ENCODE measurements at regions of chr6 and their contacts with region 1.

Region 1: GRCh38 chr6:291697-292505 is at the start of gene DUSP22:
- DNase-seq: peak; percentile 90 to 100 (median 100)
- ATAC-seq: peak; percentile 91
- H3K4me3 ChIP-seq: peak within 1 kb of the TSS; percentile 49
- H3K27ac ChIP-seq: peak within 1 kb of the TSS; percentile 68
- H3K4me1 ChIP-seq: peaks cover 11 to 21% of the 10 kb centered on the region in 2 experiments; a peak in 4 of 5 replicates
- H3K27me3 ChIP-seq: peaks cover 12 to 24% of the 10 kb centered on the region in 2 experiments
- CTCF ChIP-seq: no peak; a peak in 1 of 6 replicates
- EP300 ChIP-seq: no peak
- POLR2A ChIP-seq: peak; percentile 73
- RAD21 ChIP-seq: peak in 1 of 2 experiments; percentile 27; a peak in 1 of 4 replicates
- polyA plus RNA-seq, gene DUSP22: 9.3 to 9.6 TPM

Region 2: DNA sequence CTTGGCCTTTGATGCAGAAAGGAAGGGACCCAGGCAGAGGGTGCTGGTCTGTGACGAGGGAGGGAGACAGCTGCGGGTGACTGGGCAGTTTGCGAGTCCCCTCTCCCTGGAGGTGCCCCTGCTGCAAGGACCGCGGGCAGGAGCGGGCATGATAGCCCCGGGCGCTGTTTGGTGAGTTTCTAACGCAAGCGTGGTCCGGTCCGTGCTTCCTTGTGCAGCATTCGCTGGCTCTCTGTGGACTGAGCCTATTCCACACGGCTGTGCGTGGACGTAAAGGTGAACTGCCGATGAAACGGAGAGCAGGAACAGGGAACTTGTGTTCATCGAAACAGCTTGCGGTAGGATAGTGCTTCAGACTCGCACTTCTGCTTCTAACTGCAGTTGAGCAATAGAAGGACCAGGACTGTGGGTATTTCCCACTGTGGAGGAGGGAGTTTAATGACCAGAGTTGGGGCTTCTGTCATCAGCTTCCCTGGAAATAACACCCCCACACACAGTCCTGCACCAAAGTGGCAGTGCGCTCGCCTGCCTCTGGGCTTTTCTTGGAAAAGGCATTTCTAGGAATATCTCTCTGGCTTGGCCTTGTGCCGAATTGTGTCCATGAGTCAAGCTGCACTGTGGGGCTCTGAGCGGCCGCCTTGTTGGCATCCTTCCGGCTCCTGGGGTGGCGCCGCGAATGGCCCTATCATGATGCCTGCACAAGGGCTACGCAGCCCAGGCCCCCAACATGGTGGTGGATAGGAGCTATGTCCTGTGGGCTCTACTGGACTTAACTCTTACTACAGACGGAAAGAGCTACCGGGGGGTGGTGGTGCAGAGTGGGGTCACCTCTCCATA is 49.3 kb after region 1 on chr6:
- CTCF ChIA-PET with region 1: no interaction called
- POLR2A ChIA-PET with region 1: interaction called, 3 read pairs
- in situ Hi-C with region 1: no loop called
- intact Hi-C with region 1: loop called (anchors 2 kb)
- DNase-seq: peak; percentile 66 to 91 (median 74)
- ATAC-seq: peak; percentile 73
- H3K4me3 ChIP-seq: no peak overlapping the region
- H3K27ac ChIP-seq: no peak overlapping the region
- H3K4me1 ChIP-seq: peaks cover 20 to 44% of the 10 kb centered on the region in 2 experiments
- H3K27me3 ChIP-seq: peaks cover 0 to 13% of the 10 kb centered on the region in 2 experiments; a peak in 3 of 5 replicates
- CTCF ChIP-seq: no peak
- EP300 ChIP-seq: peak; percentile 75
- POLR2A ChIP-seq: no peak
- RAD21 ChIP-seq: peak in 1 of 2 experiments; percentile 30; a peak in 1 of 4 replicates

Region 3: GRCh38 chr6:408599-409102 is 116.8 kb after region 1 on chr6:
- CTCF ChIA-PET with region 1: no interaction called
- POLR2A ChIA-PET with region 1: no interaction called
- in situ Hi-C with region 1: no loop called
- intact Hi-C with region 1: loop called (anchors 5 kb)
- DNase-seq: peak; percentile 65 to 74 (median 70)
- ATAC-seq: peak; percentile 100
- H3K4me3 ChIP-seq: no peak overlapping the region
- H3K27ac ChIP-seq: no peak overlapping the region
- H3K4me1 ChIP-seq: peaks cover 0 to 2% of the 10 kb centered on the region in 2 experiments; a peak in 2 of 5 replicates
- H3K27me3 ChIP-seq: peaks cover 36 to 44% of the 10 kb centered on the region in 2 experiments
- CTCF ChIP-seq: peak; percentile 73 to 86 (median 82)
- EP300 ChIP-seq: no peak
- POLR2A ChIP-seq: no peak
- RAD21 ChIP-seq: peak; percentile 82 to 89

Measured in K562 (cell line).